Activated naive CD8-positive, alpha-beta T cell treated with anti-CD3 and anti-CD28 coated beads, Interleukin-2, amount 10 ng/mL, durations not matched to agents 7 days and 5 days (primary cell): ENCODE measurements at regions of chr20 and their contacts with region 1.

Region 1: DNA sequence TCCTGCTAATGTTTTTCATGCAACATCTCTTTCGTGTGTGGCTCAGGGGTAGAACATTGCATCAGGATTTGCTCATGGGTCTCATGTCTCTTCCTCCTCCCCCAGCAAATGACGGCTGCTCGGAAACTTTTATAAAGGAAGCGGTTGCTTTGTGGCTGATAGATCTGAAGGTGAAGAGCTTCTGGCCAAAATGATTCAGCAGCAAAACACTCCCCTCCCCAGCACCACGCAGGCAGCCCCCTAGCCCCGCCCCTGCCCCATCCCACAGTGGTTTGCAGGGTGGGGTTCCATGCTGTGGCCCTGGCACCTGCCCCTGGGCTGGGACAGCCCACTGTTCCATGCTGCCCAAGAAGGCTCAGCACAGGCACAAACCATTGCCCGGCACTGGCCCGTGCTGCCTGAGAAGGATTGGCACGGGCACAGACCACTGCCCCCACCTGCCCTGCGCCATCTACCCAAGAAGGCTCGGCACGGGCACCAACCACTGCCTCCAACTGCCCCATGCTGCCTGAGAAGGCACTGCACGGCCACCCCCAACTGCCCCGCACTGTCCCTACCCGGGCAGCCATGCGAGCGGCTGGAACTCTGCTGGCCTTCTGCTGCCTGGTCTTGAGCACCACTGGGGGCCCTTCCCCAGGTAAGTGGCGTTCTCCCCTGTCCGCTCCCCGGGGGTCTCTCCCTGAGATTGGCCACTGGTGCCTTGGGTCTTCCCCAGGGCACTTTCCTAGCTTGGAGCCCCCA is at the start of gene CST7:
- DNase-seq: peak; percentile 81
- ATAC-seq: peak; percentile 92
- H3K4me3 Mint-ChIP-seq: peak within 1 kb of the TSS; percentile 87
- H3K27ac Mint-ChIP-seq: peak within 1 kb of the TSS; percentile 99
- H3K4me1 Mint-ChIP-seq: peaks cover 49% of the 10 kb centered on the region
- H3K27me3 Mint-ChIP-seq: no peaks in the 10 kb centered on the region
- total RNA-seq, gene CST7: 92.0 to 92.4 TPM

Region 2: GRCh38 chr20:24738981-24739633 is 210.0 kb before region 1 on chr20:
- POLR2A ChIA-PET with region 1: no interaction called
- DNase-seq: no peak
- ATAC-seq: peak; percentile 75
- H3K4me3 Mint-ChIP-seq: peak overlapping the region; percentile 83
- H3K27ac Mint-ChIP-seq: peak overlapping the region; percentile 91
- H3K4me1 Mint-ChIP-seq: peaks cover 18% of the 10 kb centered on the region
- H3K27me3 Mint-ChIP-seq: no peaks in the 10 kb centered on the region

Region 3: GRCh38 chr20:24934101-24934661 is 14.9 kb before region 1 on chr20:
- POLR2A ChIA-PET with region 1: interaction called, 19 read pairs
- DNase-seq: no peak
- ATAC-seq: no peak
- H3K4me3 Mint-ChIP-seq: no peak overlapping the region
- H3K27ac Mint-ChIP-seq: no peak overlapping the region
- H3K4me1 Mint-ChIP-seq: peaks cover 22% of the 10 kb centered on the region
- H3K27me3 Mint-ChIP-seq: no peaks in the 10 kb centered on the region

Region 4: GRCh38 chr20:24992487-24993205 is 43.5 kb after region 1 on chr20 and contains the start of gene APMAP:
- POLR2A ChIA-PET with region 1: interaction called, 13 read pairs
- DNase-seq: peak; percentile 98
- ATAC-seq: peak; percentile 92
- H3K4me3 Mint-ChIP-seq: peak within 1 kb of the TSS; percentile 97
- H3K27ac Mint-ChIP-seq: peak within 1 kb of the TSS; percentile 95
- H3K4me1 Mint-ChIP-seq: peaks cover 43% of the 10 kb centered on the region
- H3K27me3 Mint-ChIP-seq: peaks cover 5% of the 10 kb centered on the region
- total RNA-seq, gene APMAP: 60.7 to 64.6 TPM